ENCODE measurements at regions of chr14 and their contacts with region 1.

Region 1: GRCh38 chr14:62138593-62138992 is 376.4 kb downstream of the SNAPC1 start:
- DNase-seq: peak; percentile 24
- ATAC-seq: peak; percentile 72

Region 2: DNA sequence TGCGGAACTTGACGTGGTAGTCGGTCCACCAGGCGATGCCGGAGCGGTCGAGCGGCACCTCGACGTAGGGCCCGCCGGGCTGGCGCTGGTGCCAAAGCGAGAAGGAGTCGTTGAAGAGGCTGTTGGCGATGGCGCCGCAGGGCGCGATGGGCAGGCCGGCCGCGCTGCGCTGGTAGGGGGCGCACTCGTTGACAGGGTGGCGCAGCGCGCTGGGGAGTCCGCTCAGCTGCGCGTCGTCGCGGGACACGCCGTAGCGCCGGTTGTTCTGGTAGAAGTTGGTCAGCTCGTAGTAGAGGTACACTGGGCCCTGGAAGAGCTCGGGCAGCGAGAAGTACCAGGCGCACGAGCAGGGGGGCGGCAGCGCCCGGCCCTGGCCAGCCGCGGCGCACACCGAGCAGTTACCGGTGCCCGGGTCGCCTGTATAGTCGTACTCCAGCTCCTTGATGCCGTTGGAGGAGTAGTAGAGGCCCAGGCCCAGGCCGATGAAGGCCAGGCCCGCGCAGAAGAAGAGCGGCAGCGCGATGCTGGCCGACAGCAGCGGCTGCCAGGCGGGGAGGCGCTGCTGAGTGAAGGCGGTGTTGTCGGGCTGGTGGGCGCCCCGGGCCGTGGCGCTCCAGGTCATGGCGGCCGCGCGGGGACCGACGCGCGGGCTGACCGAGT is 857.9 kb before region 1 on chr14:
- intact Hi-C with region 1: loop called (anchors 10 kb)
- DNase-seq: peak; percentile 78
- ATAC-seq: peak; percentile 89

Measured in left ventricle myocardium superior (tissue), 1 donor.